ENCODE measurements at regions of chr4 and their contacts with region 1.

Region 1: DNA sequence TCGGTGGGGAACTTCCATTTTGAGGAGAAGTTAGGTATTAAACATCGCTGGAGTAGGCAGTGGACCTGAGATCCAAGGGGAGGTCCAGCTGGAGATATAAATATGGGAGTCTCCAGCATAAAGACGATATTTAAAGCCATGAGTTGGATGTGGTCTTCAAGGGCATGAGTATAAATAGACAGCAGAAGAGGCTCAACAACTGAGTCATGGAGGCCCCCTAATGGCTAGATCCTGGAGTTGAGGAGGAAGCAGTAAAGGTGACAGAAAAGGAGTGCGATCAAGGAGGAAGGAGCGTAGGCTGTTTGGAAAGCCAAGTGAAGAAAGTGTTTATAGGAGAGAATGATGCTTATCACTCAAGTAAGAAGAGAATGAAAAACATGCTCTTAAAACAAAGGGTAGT is 18.1 kb upstream of the APBB2 start:
- DNase-seq: peak; percentile 27
- H3K4me3 ChIP-seq: no peak overlapping the region
- H3K27ac ChIP-seq: no peak overlapping the region
- H3K4me1 ChIP-seq: no peaks in the 10 kb centered on the region
- CTCF ChIP-seq: peak; percentile 57

Region 2: DNA sequence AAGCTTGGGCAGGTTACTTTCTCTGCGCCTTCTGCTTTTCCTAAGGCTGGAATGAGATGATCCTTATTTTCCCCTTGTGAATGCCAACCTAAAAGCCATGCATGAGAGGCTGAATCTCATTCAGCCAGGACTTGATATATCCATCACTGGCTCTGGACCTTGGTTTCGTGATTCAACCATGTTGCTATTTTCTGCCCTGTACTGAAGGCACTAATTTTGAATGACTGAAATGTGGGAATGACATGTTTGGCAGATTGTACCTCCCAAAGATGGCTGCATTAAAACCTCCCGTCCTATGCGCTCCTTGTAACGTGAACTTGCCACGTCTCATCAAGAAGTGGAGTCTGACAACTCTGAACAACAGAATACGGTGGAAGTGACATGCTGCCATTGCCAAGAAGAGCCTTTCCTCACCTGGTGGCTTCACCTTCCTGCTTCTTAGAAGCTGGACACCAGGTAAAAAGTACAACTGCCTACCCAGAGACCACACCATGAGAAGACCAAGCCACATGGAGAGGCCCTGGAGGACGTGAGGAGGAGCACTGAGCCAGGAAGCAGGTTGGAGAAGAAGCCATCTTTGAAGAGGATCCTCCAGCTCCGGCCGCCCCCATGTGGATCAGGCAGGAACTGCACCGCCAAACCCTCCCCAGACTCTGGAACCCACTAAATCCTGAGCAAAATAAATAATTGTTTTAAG is 308.2 kb before region 1 on chr4:
- CTCF ChIA-PET with region 1: no interaction called
- POLR2A ChIA-PET with region 1: no interaction called
- intact Hi-C with region 1: loop called (anchors 5 kb)
- DNase-seq: peak; percentile 74
- H3K4me3 ChIP-seq: no peak overlapping the region
- H3K27ac ChIP-seq: no peak overlapping the region
- H3K4me1 ChIP-seq: no peaks in the 10 kb centered on the region
- CTCF ChIP-seq: peak; percentile 94

Region 3: DNA sequence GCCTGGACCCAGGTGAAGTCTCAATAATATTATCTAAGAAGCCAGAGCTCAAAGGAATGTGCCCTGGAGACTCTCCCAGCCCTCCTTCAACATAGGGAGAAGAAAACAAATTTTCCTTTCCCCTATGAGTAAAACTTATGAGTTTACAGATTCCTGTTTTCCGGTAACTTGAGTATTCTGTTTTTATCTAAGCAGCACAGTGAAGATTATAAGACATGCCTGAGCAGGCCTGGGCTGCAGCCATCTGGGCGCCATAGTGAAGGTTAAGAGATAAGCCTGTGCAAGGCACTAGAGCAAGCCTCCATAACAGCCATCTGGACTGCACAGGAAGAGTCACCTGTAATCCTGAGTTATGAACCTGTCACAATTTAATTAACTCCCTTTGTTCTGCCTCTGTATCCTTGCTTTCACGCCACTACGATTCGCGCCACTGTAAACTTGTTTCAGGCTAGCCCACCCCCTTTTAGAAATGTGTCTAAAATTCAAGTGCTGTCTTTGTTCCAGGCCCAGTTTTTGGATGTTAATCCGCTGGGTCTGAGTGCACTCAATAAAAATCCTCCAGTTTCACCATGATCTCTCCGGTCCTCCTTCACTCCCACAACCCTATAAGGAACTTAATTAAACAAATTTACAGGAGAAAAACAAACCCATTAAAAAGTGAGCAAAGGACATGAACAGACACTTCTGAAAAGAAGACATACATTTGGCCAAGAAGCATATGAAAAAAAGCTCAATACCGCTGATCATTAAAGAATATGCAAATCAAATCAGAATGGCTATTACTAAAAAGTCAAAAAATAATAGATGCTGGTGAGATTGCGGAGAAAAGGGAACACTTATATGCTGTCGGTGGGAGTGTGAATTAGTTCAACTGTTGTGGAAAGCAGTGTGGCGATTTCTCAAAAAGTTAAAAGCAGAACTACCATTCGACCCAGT is 207.6 kb before region 1 on chr4:
- CTCF ChIA-PET with region 1: no interaction called
- POLR2A ChIA-PET with region 1: no interaction called
- intact Hi-C with region 1: no loop called
- DNase-seq: peak; percentile 64
- H3K4me3 ChIP-seq: no peak overlapping the region
- H3K27ac ChIP-seq: no peak overlapping the region
- H3K4me1 ChIP-seq: no peaks in the 10 kb centered on the region
- CTCF ChIP-seq: no peak

Region 4: DNA sequence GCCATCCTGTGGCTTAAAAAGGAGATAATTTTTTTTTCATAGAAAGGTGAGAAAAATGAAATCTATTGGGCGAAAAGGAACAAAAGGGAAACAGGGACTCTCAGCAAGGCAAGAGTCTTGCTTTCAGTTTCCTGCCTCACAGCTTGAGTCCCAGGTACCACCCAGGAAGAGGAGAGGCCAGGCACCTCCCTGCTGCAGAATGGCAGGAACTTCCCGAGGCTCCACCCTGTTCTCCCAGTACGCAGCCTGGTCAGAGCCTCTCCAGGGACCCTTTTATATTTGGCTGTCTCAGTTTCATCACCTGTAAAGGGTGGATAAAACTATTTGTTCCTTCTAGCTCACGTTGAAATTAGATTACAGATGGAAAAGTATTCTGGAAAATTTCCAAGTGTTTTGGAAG is 58.1 kb after region 1 on chr4:
- CTCF ChIA-PET with region 1: no interaction called
- POLR2A ChIA-PET with region 1: no interaction called
- intact Hi-C with region 1: no loop called
- DNase-seq: no peak
- H3K4me3 ChIP-seq: no peak overlapping the region
- H3K27ac ChIP-seq: no peak overlapping the region
- H3K4me1 ChIP-seq: no peaks in the 10 kb centered on the region
- CTCF ChIP-seq: no peak

Region 5: GRCh38 chr4:41432881-41433280 is 200.5 kb after region 1 on chr4:
- CTCF ChIA-PET with region 1: no interaction called
- POLR2A ChIA-PET with region 1: no interaction called
- intact Hi-C with region 1: no loop called
- DNase-seq: no peak
- H3K4me3 ChIP-seq: no peak overlapping the region
- H3K27ac ChIP-seq: no peak overlapping the region
- H3K4me1 ChIP-seq: no peaks in the 10 kb centered on the region
- CTCF ChIP-seq: no peak